ENCODE measurements at regions of chr12 and their contacts with region 1.

Region 1: GRCh38 chr12:96375841-96376604 is 24.2 kb downstream of the CDK17 start:
- H3K4me3 Mint-ChIP-seq: peak overlapping the region; percentile 26
- H3K27ac Mint-ChIP-seq: peak overlapping the region; percentile 43
- H3K4me1 Mint-ChIP-seq: peaks cover 47% of the 10 kb centered on the region
- H3K27me3 Mint-ChIP-seq: no peaks in the 10 kb centered on the region

Region 2: GRCh38 chr12:96112733-96113132 is 263.3 kb before region 1 on chr12:
- intact Hi-C with region 1: no loop called
- H3K4me3 Mint-ChIP-seq: no peak overlapping the region
- H3K27ac Mint-ChIP-seq: no peak overlapping the region
- H3K4me1 Mint-ChIP-seq: peaks cover 28% of the 10 kb centered on the region
- H3K27me3 Mint-ChIP-seq: peaks cover 19% of the 10 kb centered on the region

Region 3: DNA sequence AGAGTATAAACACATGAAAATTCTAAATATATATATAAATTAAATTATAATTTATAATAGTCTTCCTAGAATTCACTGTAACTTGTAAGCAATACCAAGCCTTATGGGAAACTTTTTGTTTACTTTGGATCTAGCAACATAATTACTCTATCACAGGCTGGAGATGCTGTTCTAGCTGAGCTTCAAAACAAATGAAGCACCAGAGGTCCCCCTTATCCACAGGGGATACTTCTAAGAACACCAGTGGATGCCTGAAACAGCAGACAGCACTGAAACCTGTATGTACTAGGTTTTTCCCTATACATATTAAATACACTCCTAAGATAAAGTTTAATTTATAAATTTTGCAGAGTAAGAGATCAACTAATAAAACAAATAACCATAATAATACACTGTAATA is 72.4 kb before region 1 on chr12:
- intact Hi-C with region 1: loop called (anchors 10 kb)
- H3K4me3 Mint-ChIP-seq: no peak overlapping the region
- H3K27ac Mint-ChIP-seq: no peak overlapping the region
- H3K4me1 Mint-ChIP-seq: no peaks in the 10 kb centered on the region
- H3K27me3 Mint-ChIP-seq: no peaks in the 10 kb centered on the region

Measured in dendritic cell treated with granulocyte-macrophage colony-stimulating factor and Interleukin-4, amounts not matched to agents 40 ng/mL and 50 ng/mL, for 4 days (primary cell).